H1 (cell line): ENCODE measurements at regions of chr19 and their contacts with region 1.

Region 1: GRCh38 chr19:13978347-13978733 is 26.0 kb downstream of the DCAF15 start:
- DNase-seq: peak; percentile 94 to 98
- H3K4me3 ChIP-seq: peak overlapping the region; percentile 42 to 70 (median 44)
- H3K27ac ChIP-seq: peak overlapping the region; percentile 56; the same call in 1 of the 2 replicates
- H3K4me1 ChIP-seq: peaks cover 0 to 15% (median 8%) of the 10 kb centered on the region in 4 experiments; a peak in 4 of 7 replicates
- H3K27me3 ChIP-seq: no peaks in the 10 kb centered on the region
- CTCF ChIP-seq: 0 out of 4 replicates have a peak, but pooled peaks of 1 of the 3 experiments have one; percentile 3
- EP300 ChIP-seq: no peak
- POLR2A ChIP-seq: no peak; a peak in 1 of 3 replicates
- RAD21 ChIP-seq: no peak

Region 2: DNA sequence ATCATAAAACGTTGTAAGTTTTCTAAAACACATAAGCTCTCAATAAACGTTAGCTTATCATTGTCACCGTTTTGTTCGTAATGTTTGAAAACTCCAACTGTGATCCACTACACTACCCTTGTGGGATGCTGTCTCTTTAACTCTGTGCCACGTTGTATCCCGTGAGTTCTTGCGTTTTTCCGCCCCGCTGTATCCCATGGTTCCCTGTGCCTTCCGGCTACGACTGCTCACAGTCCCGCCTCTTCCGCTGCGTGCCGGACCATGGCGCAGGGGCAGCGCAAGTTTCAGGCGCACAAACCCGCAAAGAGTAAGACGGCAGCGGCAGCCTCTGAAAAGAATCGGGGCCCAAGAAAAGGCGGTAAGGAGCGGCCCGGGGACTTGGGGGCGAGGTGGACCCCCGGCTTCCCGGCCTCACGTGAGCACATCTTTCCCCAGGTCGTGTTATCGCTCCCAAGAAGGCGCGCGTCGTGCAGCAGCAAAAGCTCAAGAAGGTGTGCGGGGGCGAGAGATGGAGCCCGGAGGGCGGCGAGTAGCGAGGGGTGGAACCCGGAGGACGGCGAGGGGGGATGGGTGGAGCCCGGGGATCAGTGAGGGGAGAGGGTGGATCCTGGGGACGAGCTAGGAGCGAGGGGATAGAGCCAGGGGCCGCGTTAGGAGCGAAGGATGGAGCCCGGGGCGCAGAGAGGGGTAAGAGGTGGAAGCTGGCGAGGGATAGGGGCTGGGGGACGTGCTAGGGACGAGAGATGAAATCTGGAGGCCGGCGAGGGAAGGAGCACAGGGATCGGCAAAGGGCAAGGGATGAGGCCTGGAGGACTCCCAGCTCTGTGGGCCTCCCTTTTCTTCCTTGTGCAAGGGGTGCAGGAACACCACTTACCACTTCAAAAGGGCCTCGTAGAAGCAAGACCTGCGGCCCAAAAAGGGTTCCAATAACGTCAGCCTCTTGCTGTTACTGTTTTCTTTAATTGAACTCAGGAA is 203.8 kb before region 1 on chr19 and contains the start of gene C19orf53:
- CTCF ChIA-PET with region 1: no interaction called
- POLR2A ChIA-PET with region 1: no interaction called
- DNase-seq: peak in 1 of 2 experiments; percentile 85
- H3K4me3 ChIP-seq: peak within 1 kb of the TSS; percentile 81 to 99 (median 92)
- H3K27ac ChIP-seq: peak within 1 kb of the TSS; percentile 92
- H3K4me1 ChIP-seq: peaks cover 0 to 4% (median 1%) of the 10 kb centered on the region in 4 experiments; a peak in 1 of 7 replicates
- H3K27me3 ChIP-seq: no peaks in the 10 kb centered on the region
- CTCF ChIP-seq: no peak
- EP300 ChIP-seq: peak in 1 of 2 experiments; percentile 28; a peak in 1 of 3 replicates
- POLR2A ChIP-seq: peak; percentile 88 to 95
- RAD21 ChIP-seq: no peak
- total RNA-seq, gene C19orf53: 104 and 116 TPM in 2 replicates

Region 3: DNA sequence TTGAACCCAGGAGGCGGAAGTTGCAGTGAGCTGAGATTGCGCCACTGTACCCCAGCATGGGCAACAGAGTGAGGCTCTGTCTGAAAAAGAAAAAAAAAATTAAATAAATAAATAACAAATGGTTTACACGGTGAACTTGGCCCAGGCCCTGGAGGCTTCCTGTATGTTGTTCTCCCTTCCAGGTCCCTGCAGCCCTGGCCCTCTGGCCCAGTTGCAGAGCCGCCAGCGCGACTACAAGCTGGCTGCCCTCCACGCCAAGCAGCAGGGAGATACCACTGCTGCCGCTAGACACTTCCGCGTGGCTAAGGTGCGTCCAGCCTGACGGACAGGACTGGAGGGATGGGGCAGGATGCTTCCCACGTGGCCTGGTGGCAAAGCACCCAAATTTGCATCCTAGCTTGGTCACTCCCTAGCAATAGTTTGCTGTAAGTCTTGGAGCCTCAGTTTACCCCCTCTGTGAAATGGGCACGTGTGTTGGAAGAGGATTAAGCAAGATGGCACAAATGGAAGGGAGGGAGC is 60.4 kb before region 1 on chr19:
- CTCF ChIA-PET with region 1: no interaction called
- POLR2A ChIA-PET with region 1: no interaction called
- DNase-seq: no peak
- H3K4me3 ChIP-seq: no peak overlapping the region
- H3K27ac ChIP-seq: no peak overlapping the region
- H3K4me1 ChIP-seq: no peaks in the 10 kb centered on the region
- H3K27me3 ChIP-seq: no peaks in the 10 kb centered on the region
- CTCF ChIP-seq: no peak
- EP300 ChIP-seq: no peak
- POLR2A ChIP-seq: no peak
- RAD21 ChIP-seq: no peak

Region 4: GRCh38 chr19:13995017-13995728 is 16.8 kb after region 1 on chr19:
- CTCF ChIA-PET with region 1: interaction called, 14 read pairs
- POLR2A ChIA-PET with region 1: interaction called, 9 read pairs
- DNase-seq: no peak
- H3K4me3 ChIP-seq: no peak overlapping the region
- H3K27ac ChIP-seq: no peak overlapping the region; the same call in 1 of the 2 replicates
- H3K4me1 ChIP-seq: no peaks in the 10 kb centered on the region; a peak in 2 of 7 replicates
- H3K27me3 ChIP-seq: no peaks in the 10 kb centered on the region
- CTCF ChIP-seq: no peak
- EP300 ChIP-seq: no peak
- POLR2A ChIP-seq: no peak
- RAD21 ChIP-seq: no peak; a peak in 1 of 4 replicates

Region 5: GRCh38 chr19:14064786-14065185 is 86.4 kb after region 1 on chr19:
- CTCF ChIA-PET with region 1: no interaction called
- POLR2A ChIA-PET with region 1: no interaction called
- DNase-seq: no peak
- H3K4me3 ChIP-seq: no peak overlapping the region
- H3K27ac ChIP-seq: no peak overlapping the region
- H3K4me1 ChIP-seq: peaks cover 0 to 3% (median 1%) of the 10 kb centered on the region in 4 experiments; a peak in 2 of 7 replicates
- H3K27me3 ChIP-seq: no peaks in the 10 kb centered on the region; a peak in 3 of 7 replicates
- CTCF ChIP-seq: no peak
- EP300 ChIP-seq: no peak
- POLR2A ChIP-seq: no peak
- RAD21 ChIP-seq: no peak